ENCODE measurements at regions of chr22 and their contacts with region 1.

Region 1: GRCh38 chr22:46592390-46592872 is 27.8 kb upstream of the GRAMD4 start:
- DNase-seq: peak; percentile 74
- ATAC-seq: peak; percentile 20 to 23

Region 2: DNA sequence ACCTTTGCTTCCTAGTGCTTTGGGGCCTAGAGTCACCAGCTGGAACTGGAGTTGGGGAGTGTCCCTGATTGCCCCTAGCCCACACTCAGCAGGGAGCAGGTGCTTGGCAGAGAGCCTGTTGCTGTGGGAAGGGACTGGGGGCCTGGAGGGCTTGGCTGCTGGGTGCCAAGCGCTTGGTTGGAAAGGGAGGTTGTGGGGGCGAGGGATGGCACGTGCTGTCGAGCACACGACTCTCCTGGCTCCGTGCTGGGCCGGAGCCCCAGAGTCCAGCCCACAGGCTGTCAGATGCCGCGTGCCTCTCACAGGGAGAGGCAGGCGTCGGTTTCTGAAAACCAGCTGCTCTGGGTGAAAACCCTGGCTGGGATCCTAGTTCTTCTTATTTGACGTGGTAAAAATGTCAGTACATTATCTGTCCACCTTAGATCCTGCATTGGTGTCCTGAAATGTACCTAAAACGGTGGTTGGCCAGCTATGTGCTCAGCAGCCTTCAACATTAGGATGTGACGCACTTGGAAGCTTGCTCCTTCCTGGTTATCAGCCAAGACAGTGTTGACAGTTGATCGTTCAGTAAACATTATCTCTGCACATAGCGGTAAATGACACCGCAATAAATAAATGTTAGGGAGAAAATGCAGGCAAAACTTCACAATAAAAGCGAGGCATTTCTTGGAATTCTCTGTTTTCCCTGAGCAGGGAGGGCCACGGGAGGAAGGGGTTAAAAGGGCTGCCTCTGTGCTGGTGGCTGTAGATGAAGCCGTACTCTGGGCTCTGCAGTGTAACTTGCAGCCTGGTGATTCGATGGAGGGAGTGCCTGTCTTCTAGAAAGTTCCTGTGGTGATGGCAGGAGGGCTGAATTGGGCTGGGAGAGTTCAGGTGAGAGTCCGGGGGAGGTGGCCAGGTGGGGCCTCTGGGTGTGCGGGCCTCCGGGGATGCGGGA is 57.0 kb after region 1 on chr22:
- intact Hi-C with region 1: loop called in 1 of 2 experiments (anchors 5 kb)
- DNase-seq: peak; percentile 71
- ATAC-seq: peak; percentile 51 to 69

Region 3: GRCh38 chr22:46762238-46763050 is 170.0 kb after region 1 on chr22 and contains the start of gene TBC1D22A:
- intact Hi-C with region 1: no loop called
- DNase-seq: peak; percentile 96
- ATAC-seq: peak; percentile 96 to 98
- total RNA-seq, gene TBC1D22A: 15.8 to 17.4 TPM